ENCODE measurements at regions of chr15 and their contacts with region 1.

Region 1: GRCh38 chr15:72671535-72671934 is 14.4 kb downstream of the HIGD2B start:
- DNase-seq: peak; percentile 90 to 100
- H3K4me3 ChIP-seq: peak overlapping the region; percentile 12
- H3K4me1 ChIP-seq: peaks cover 18% of the 10 kb centered on the region
- H3K27me3 ChIP-seq: no peaks in the 10 kb centered on the region

Region 2: GRCh38 chr15:72599855-72600464 is 71.6 kb before region 1 on chr15:
- in situ Hi-C with region 1: loop called (anchors 10 kb)
- DNase-seq: peak; percentile 76 to 80
- H3K4me3 ChIP-seq: no peak overlapping the region
- H3K4me1 ChIP-seq: no peaks in the 10 kb centered on the region
- H3K27me3 ChIP-seq: no peaks in the 10 kb centered on the region

Region 3: GRCh38 chr15:72616491-72617210 is 54.9 kb before region 1 on chr15:
- in situ Hi-C with region 1: loop called (anchors 10 kb)
- DNase-seq: no peak
- H3K4me3 ChIP-seq: no peak overlapping the region
- H3K4me1 ChIP-seq: no peaks in the 10 kb centered on the region
- H3K27me3 ChIP-seq: peaks cover 6% of the 10 kb centered on the region

Region 4: DNA sequence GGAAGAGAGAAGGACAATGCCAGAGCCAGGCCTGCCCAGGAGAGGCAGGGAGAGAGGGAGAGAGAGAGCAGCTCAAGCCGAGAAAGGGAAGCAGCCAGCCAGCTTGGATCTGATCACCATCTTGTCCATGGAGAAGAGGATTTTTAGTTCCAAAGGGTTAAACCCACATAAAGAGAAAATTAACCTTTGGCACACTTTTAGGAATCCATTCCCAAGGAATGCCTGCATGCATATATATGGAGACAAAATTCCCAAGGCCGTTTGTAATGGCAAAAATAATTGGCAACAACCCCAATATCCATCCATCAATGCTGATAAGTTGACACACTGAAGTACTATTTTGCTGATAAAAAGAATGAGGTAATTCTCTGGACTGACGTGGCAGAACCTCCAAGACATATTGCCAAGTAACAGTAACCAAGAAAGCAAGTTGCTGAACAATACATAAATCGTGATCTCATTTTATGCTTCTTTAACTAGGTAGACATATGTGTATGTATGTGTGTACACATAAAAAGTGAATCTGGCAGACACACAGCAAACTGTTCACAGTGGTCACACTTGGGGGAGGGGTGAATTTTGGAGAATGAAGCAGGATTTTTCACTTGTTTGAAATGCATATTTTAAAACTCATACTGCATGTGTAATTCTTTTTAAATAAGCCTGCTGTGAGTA is 1538.6 kb after region 1 on chr15:
- in situ Hi-C with region 1: loop called (anchors 10 kb)
- DNase-seq: no peak
- H3K4me3 ChIP-seq: no peak overlapping the region
- H3K4me1 ChIP-seq: peaks cover 31% of the 10 kb centered on the region
- H3K27me3 ChIP-seq: no peaks in the 10 kb centered on the region